SK-N-SH (cell line): ENCODE measurements at regions of chr17 and their contacts with region 1.

Region 1: DNA sequence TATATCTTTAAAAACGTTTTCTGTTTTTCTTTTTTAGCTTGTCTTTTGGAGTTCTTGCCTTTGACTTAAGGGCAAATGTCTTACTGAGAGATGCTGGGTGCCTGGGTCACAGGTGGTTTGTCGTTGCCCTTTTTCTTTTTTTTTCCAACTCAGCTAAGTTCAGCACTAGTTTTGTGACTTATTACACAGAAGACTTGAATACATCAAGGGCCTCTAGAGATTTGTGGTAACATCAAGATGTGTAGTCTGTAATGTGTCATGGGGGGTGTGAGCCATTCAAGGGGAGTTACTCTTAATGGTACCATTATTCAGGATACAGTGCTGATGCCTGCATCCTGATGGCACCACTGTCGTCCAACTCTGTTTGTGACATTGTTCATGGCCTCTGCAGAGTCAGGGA is 95.1 kb downstream of the PRKCA start:
- DNase-seq: no peak
- H3K4me3 ChIP-seq: no peak overlapping the region
- H3K27ac ChIP-seq: peak overlapping the region in 1 of 2 experiments; percentile 98; a peak in 2 of 4 replicates
- H3K4me1 ChIP-seq: peaks cover 0 to 33% of the 10 kb centered on the region in 2 experiments; a peak in 2 of 4 replicates
- H3K27me3 ChIP-seq: no peaks in the 10 kb centered on the region
- CTCF ChIP-seq: no peak
- EP300 ChIP-seq: no peak
- RAD21 ChIP-seq: no peak

Region 2: DNA sequence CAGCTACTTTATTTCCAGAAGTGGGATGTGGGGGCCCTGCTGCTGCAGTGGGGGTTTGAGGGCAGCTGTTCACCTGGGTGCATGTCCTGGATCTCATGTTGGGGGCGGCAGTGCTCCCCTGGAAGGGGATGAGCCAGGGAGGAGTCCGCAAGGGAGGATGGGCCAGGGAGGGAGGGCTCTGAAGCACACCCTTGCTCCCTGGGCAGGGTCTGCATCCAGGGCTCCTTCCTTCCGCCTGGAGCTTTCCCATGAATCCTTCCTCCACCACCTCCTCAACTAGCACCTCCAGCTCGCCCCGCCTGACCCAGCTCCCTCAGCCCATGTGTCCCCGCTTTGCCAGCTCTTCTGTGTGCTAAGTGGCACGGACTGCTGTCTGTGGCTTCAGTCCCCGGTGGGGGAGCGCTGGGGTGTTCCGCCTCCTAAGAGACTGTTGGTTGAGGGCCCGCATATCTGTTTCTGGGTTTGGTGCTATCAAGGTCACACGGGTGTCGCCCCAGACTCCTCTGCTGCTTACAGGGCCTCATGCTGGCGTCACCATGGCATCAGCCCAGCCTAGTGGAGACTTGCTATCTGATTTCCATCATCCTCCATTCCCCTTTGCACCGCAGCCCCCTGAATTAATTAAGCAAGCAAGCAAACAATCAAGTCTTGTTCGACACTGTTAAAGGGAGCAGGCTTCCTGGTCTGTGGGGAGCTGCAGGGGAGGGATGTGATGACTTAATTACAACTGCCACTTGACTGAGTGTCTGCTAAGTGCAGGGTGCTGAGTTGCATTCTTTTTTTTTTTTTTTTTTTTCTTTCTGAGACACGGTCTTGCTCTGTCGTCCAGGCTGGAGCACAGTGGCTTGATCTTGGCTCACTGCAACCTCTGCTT is 23.3 kb before region 1 on chr17:
- CTCF ChIA-PET with region 1: interaction called, 14 read pairs
- POLR2A ChIA-PET with region 1: no interaction called
- DNase-seq: peak; percentile 77
- H3K4me3 ChIP-seq: no peak overlapping the region
- H3K27ac ChIP-seq: peak overlapping the region; percentile 16 to 65; a peak in 3 of 4 replicates
- H3K4me1 ChIP-seq: peaks cover 29 to 30% of the 10 kb centered on the region in 2 experiments; a peak in 3 of 4 replicates
- H3K27me3 ChIP-seq: no peaks in the 10 kb centered on the region
- CTCF ChIP-seq: no peak
- EP300 ChIP-seq: peak in 1 of 2 experiments; percentile 81; a peak in 2 of 4 replicates
- RAD21 ChIP-seq: peak; percentile 36

Region 3: GRCh38 chr17:66381701-66382362 is 15.7 kb before region 1 on chr17:
- CTCF ChIA-PET with region 1: interaction called, 14 read pairs
- POLR2A ChIA-PET with region 1: no interaction called
- DNase-seq: no peak
- H3K4me3 ChIP-seq: no peak overlapping the region
- H3K27ac ChIP-seq: peak overlapping the region in 1 of 2 experiments; percentile 66; a peak in 1 of 4 replicates
- H3K4me1 ChIP-seq: peaks cover 9 to 12% of the 10 kb centered on the region in 2 experiments; a peak in 3 of 4 replicates
- H3K27me3 ChIP-seq: no peaks in the 10 kb centered on the region
- CTCF ChIP-seq: no peak
- EP300 ChIP-seq: no peak
- RAD21 ChIP-seq: no peak

Region 4: DNA sequence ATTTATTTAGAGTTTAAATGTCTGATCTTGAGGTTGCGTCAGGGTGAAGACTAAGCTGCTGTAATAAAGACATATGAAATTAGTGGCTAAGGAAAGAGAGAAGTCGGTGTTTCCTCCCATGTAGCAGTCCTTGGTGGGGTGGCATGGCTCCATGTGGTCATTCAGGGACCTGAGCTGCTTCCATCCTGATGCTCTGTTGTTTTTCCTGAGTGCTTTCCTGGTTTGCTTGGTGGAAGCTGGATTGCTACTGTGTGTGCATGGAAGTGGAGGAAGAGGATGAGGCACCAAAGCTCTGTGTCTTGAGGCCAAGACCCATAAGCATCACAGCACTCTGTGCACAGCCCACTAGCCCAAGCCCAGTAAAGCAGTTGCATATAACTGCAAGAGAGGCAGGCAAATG is 195.6 kb after region 1 on chr17:
- CTCF ChIA-PET with region 1: no interaction called
- POLR2A ChIA-PET with region 1: no interaction called
- DNase-seq: no peak
- H3K4me3 ChIP-seq: no peak overlapping the region
- H3K27ac ChIP-seq: no peak overlapping the region
- H3K4me1 ChIP-seq: no peaks in the 10 kb centered on the region; a peak in 1 of 4 replicates
- H3K27me3 ChIP-seq: no peaks in the 10 kb centered on the region
- CTCF ChIP-seq: no peak
- EP300 ChIP-seq: no peak
- RAD21 ChIP-seq: no peak